Mammary epithelial cell (primary cell): ENCODE measurements at regions of chr4 and their contacts with region 1.

Region 1: GRCh38 chr4:41214136-41214824 is at the start of gene APBB2:
- DNase-seq: peak; percentile 96
- H3K4me3 ChIP-seq: peak within 1 kb of the TSS; percentile 91 to 95 (median 92)
- H3K27ac ChIP-seq: peak within 1 kb of the TSS; percentile 84
- H3K4me1 ChIP-seq: peaks cover 25% of the 10 kb centered on the region
- H3K27me3 ChIP-seq: no peaks in the 10 kb centered on the region
- CTCF ChIP-seq: peak; percentile 48 to 78
- total RNA-seq, gene APBB2: 75.8 to 81.7 TPM

Region 2: GRCh38 chr4:40736910-40737309 is 477.4 kb before region 1 on chr4:
- CTCF ChIA-PET with region 1: no interaction called
- dilution Hi-C with region 1: no loop called
- in situ Hi-C with region 1: no loop called
- intact Hi-C with region 1: loop called (anchors 1 kb)
- DNase-seq: peak; percentile 31
- H3K4me3 ChIP-seq: no peak overlapping the region
- H3K27ac ChIP-seq: no peak overlapping the region
- H3K4me1 ChIP-seq: no peaks in the 10 kb centered on the region
- H3K27me3 ChIP-seq: no peaks in the 10 kb centered on the region
- CTCF ChIP-seq: peak; percentile 19 to 47

Region 3: DNA sequence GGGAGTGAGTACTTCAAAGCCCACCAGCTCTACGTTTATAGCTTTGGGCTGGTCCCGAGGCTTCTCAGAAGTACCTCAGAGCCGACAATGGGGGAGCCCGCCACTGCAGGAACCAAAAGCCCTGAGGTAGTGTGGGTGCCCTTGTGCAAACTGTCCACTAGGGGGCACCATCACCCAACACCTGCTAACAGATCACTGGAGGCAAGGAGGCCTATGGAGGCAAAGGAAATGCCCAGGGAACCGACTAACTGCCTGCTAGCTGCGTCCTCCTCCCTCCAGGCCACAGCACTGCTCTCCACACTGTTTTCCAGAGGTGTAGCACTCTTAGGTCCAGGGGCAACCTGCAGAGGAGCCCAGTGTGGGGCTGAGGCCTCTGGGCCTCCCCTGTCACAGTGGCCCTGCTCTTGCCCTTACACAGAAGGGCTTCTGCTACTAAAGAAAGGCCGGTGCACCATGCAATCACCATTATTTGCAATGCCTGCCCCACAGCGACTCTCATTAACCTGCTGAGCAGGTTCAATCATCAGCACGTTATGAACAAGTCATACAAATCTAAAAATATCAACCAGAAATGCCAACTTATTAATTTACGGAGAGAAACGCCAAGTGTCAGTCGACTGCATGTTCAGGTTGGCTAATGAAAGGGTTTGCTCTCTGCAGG is 305.4 kb before region 1 on chr4:
- CTCF ChIA-PET with region 1: no interaction called
- dilution Hi-C with region 1: no loop called
- in situ Hi-C with region 1: no loop called
- intact Hi-C with region 1: loop called (anchors 5 kb)
- DNase-seq: peak; percentile 57
- H3K4me3 ChIP-seq: no peak overlapping the region
- H3K27ac ChIP-seq: peak overlapping the region; percentile 37
- H3K4me1 ChIP-seq: peaks cover 27% of the 10 kb centered on the region
- H3K27me3 ChIP-seq: no peaks in the 10 kb centered on the region
- CTCF ChIP-seq: peak; percentile 89 to 90

Region 4: DNA sequence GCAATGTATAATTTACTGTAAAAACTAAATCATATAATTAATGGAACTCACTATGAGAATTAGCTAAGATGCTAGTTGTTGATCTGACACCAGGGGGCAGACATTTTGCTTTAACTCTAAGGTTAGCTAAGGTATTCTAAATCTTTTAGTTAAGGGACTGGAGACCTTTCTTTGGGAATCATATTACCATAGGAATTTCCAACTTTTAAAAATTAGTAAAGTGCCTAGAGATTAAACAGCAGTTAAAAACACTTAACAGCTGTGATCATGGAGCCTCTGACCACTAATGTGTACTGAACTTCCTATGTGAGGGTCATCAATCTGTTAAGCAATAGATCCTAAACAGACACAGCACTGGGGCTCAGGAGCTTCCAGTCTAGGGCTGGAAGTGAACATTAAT is 237.9 kb before region 1 on chr4:
- CTCF ChIA-PET with region 1: interaction called, 8 read pairs
- dilution Hi-C with region 1: loop called (anchors 25 kb)
- in situ Hi-C with region 1: loop called in 1 of 2 experiments (anchors 5 kb)
- intact Hi-C with region 1: loop called (anchors 1 kb)
- DNase-seq: peak; percentile 42
- H3K4me3 ChIP-seq: no peak overlapping the region
- H3K27ac ChIP-seq: no peak overlapping the region
- H3K4me1 ChIP-seq: no peaks in the 10 kb centered on the region
- H3K27me3 ChIP-seq: no peaks in the 10 kb centered on the region
- CTCF ChIP-seq: peak; percentile 60 to 75

Region 5: GRCh38 chr4:41095973-41096372 is 118.3 kb before region 1 on chr4:
- CTCF ChIA-PET with region 1: no interaction called
- dilution Hi-C with region 1: no loop called
- in situ Hi-C with region 1: no loop called
- intact Hi-C with region 1: loop called (anchors 5 kb)
- DNase-seq: peak; percentile 86
- H3K4me3 ChIP-seq: no peak overlapping the region
- H3K27ac ChIP-seq: peak overlapping the region; percentile 37
- H3K4me1 ChIP-seq: peaks cover 10% of the 10 kb centered on the region
- H3K27me3 ChIP-seq: no peaks in the 10 kb centered on the region
- CTCF ChIP-seq: no peak

Region 6: DNA sequence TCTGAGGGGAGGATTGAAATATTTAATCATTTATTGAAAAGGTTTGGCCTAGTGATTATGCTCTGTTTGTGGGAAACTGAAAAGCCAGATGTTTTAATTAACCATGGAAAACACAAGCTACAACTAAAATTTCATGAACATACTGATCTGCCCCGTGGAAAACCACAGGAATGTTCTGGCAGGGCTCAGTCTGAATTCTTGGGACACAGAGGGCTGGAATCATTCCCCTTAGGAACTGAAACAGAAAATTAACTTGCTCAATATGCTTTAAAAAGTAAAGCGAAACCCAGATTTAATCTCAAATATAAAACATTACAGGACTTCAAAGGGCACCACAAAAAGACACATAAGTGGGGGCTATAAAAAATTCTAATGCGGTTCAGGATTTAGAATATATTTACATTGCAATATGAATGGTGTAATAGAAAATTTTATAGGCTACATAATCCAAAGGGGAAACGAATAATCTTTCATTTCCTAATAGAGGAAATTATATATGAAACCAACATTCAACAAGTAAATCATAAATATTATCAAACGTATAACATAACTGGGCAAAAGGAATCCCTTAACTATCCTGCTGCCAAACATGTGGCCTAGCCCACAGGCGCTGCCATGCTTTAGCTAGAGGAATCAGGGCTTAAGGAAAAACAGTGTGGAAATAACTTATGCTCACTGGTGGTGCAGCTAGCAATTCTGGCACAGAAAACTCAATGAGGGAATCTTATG is 70.8 kb before region 1 on chr4:
- CTCF ChIA-PET with region 1: no interaction called
- dilution Hi-C with region 1: no loop called
- in situ Hi-C with region 1: no loop called
- intact Hi-C with region 1: loop called (anchors 5 kb)
- DNase-seq: peak; percentile 75
- H3K4me3 ChIP-seq: peak overlapping the region in 2 of 3 experiments; percentile 2 to 19
- H3K27ac ChIP-seq: peak overlapping the region; percentile 98
- H3K4me1 ChIP-seq: peaks cover 69% of the 10 kb centered on the region
- H3K27me3 ChIP-seq: no peaks in the 10 kb centered on the region
- CTCF ChIP-seq: no peak

Region 7: DNA sequence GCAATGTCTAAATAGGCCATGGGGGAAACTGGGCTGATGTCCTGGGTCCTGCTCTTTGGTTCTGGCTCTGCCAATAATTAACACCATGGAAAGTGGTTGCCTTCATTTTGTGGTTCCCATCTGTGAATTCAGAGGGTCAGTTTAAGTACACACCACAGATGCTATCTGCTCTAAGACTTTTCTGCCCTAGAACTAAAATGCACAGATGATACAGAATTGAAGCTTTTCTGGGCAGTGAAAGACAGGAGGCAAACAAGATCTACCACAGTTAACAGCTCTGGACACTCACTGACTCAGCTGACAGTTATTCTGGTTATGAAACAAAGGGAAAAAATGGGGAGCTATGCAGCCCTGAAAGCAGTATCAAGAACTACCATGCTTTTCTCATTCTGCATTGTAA is 37.3 kb before region 1 on chr4:
- CTCF ChIA-PET with region 1: interaction called, 20 read pairs
- dilution Hi-C with region 1: no loop called
- in situ Hi-C with region 1: no loop called
- intact Hi-C with region 1: loop called (anchors 1 kb)
- DNase-seq: peak; percentile 72
- H3K4me3 ChIP-seq: no peak overlapping the region
- H3K27ac ChIP-seq: peak overlapping the region; percentile 9
- H3K4me1 ChIP-seq: peaks cover 40% of the 10 kb centered on the region
- H3K27me3 ChIP-seq: no peaks in the 10 kb centered on the region
- CTCF ChIP-seq: peak; percentile 31 to 43

Region 8: GRCh38 chr4:41394362-41394960 is 180.2 kb after region 1 on chr4:
- CTCF ChIA-PET with region 1: no interaction called
- dilution Hi-C with region 1: no loop called
- in situ Hi-C with region 1: no loop called
- intact Hi-C with region 1: no loop called
- DNase-seq: no peak
- H3K4me3 ChIP-seq: no peak overlapping the region
- H3K27ac ChIP-seq: no peak overlapping the region
- H3K4me1 ChIP-seq: no peaks in the 10 kb centered on the region
- H3K27me3 ChIP-seq: peaks cover 2% of the 10 kb centered on the region
- CTCF ChIP-seq: no peak